Dendritic cell treated with granulocyte-macrophage colony-stimulating factor and Interleukin-4, amounts not matched to agents 40 ng/mL and 50 ng/mL, for 4 days (primary cell): ENCODE measurements at regions of chr13 and their contacts with region 1.

Region 1: DNA sequence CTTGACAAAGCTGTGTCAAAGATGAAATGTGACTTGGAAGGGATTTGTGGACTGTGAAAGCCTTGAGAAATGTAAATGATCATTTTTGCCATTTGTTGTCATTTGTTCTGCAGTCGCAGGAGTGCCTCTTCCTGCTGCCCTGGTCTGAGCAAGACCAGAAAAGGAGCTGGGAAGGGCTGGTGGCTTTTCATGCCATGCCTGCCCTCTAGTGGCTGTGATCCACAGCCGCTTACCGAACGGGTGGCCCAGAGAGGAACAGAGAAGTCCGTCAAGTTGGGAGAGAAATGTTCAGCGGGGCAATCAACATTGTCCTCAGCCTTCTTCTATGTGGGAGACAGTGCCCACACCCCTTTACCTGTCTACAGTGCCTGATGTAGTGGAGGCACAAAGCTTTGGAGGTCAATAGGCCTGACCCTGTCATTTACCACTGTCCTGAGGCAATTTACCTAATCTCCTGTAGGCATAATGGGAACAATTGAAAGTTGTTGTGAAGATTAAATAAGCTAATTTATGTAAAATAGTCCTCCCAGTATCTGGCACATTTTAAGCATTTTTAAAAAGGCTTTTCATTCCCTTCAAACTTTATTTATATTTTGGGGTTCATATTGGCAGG is 224.4 kb downstream of the B3GLCT start:
- H3K4me3 Mint-ChIP-seq: no peak overlapping the region
- H3K27ac Mint-ChIP-seq: no peak overlapping the region
- H3K4me1 Mint-ChIP-seq: no peaks in the 10 kb centered on the region
- H3K27me3 Mint-ChIP-seq: peaks cover 2% of the 10 kb centered on the region

Region 2: GRCh38 chr13:31199849-31200636 is 224.2 kb before region 1 on chr13 and contains the start of gene B3GLCT:
- intact Hi-C with region 1: loop called (anchors 10 kb)
- H3K4me3 Mint-ChIP-seq: peak within 1 kb of the TSS; percentile 77
- H3K27ac Mint-ChIP-seq: peak within 1 kb of the TSS; percentile 81
- H3K4me1 Mint-ChIP-seq: peaks cover 53% of the 10 kb centered on the region
- H3K27me3 Mint-ChIP-seq: peaks cover 4% of the 10 kb centered on the region

Region 3: DNA sequence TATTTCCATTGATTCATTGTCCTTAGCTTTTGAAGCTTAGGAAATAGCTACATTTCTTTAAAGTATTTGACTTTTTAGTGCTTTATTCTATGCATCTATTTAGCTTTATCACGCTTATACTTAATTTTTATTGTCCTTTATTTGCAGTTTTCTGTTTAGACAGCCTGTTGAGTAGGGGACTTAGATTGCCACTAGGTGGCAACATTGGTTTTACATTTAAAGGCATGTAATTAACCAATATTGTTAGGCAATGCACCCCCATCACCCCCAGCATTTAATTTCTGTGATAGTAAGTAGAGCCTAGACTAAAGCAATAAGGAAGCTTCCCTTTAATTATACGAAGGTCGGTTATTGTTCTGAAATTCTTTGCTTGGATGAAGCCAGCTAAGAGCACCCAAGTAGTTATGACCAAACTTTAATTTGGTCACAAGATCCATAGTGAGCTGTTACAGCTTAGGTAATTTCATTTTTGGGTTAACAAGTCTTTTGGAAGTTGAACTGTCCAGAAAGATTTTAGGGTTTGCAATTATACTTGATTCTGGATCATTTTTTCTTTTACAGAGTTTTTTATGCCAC is 187.9 kb before region 1 on chr13:
- intact Hi-C with region 1: loop called (anchors 2 kb)
- H3K4me3 Mint-ChIP-seq: no peak overlapping the region
- H3K27ac Mint-ChIP-seq: no peak overlapping the region
- H3K4me1 Mint-ChIP-seq: no peaks in the 10 kb centered on the region
- H3K27me3 Mint-ChIP-seq: no peaks in the 10 kb centered on the region